CD8-positive, alpha-beta T cell (primary cell): ENCODE measurements at regions of chr1 and their contacts with region 1.

Region 1: GRCh38 chr1:23367791-23368561 is 1.7 kb downstream of the ZNF436 start:
- DNase-seq: peak; percentile 94 to 99 (median 97)
- ATAC-seq: peak; percentile 90
- H3K4me3 ChIP-seq: peak overlapping the region; percentile 95 to 97
- H3K4me3 Mint-ChIP-seq: peak overlapping the region; percentile 100
- H3K27ac ChIP-seq: peak overlapping the region; percentile 68 to 92
- H3K27ac Mint-ChIP-seq: peak overlapping the region; percentile 94
- H3K4me1 ChIP-seq: peaks cover 21% of the 10 kb centered on the region
- H3K4me1 Mint-ChIP-seq: peaks cover 38% of the 10 kb centered on the region
- H3K27me3 ChIP-seq: no peaks in the 10 kb centered on the region
- H3K27me3 Mint-ChIP-seq: no peaks in the 10 kb centered on the region
- CTCF ChIP-seq: no peak

Region 2: GRCh38 chr1:23344111-23344986 is 23.6 kb before region 1 on chr1 and contains the start of gene HNRNPR:
- CTCF ChIA-PET with region 1: interaction called, 4 read pairs
- POLR2A ChIA-PET with region 1: interaction called, 46 read pairs
- intact Hi-C with region 1: loop called (anchors 1 kb)
- DNase-seq: peak; percentile 97 to 100 (median 99)
- ATAC-seq: peak; percentile 96
- H3K4me3 ChIP-seq: peak within 1 kb of the TSS; percentile 70 to 93
- H3K4me3 Mint-ChIP-seq: peak within 1 kb of the TSS; percentile 94
- H3K27ac ChIP-seq: peak within 1 kb of the TSS; percentile 66 to 78
- H3K27ac Mint-ChIP-seq: peak within 1 kb of the TSS; percentile 96
- H3K4me1 ChIP-seq: peaks cover 31% of the 10 kb centered on the region
- H3K4me1 Mint-ChIP-seq: peaks cover 42% of the 10 kb centered on the region
- H3K27me3 ChIP-seq: no peaks in the 10 kb centered on the region
- H3K27me3 Mint-ChIP-seq: no peaks in the 10 kb centered on the region
- CTCF ChIP-seq: no peak
- total RNA-seq, gene HNRNPR: 102 to 103 TPM

Region 3: DNA sequence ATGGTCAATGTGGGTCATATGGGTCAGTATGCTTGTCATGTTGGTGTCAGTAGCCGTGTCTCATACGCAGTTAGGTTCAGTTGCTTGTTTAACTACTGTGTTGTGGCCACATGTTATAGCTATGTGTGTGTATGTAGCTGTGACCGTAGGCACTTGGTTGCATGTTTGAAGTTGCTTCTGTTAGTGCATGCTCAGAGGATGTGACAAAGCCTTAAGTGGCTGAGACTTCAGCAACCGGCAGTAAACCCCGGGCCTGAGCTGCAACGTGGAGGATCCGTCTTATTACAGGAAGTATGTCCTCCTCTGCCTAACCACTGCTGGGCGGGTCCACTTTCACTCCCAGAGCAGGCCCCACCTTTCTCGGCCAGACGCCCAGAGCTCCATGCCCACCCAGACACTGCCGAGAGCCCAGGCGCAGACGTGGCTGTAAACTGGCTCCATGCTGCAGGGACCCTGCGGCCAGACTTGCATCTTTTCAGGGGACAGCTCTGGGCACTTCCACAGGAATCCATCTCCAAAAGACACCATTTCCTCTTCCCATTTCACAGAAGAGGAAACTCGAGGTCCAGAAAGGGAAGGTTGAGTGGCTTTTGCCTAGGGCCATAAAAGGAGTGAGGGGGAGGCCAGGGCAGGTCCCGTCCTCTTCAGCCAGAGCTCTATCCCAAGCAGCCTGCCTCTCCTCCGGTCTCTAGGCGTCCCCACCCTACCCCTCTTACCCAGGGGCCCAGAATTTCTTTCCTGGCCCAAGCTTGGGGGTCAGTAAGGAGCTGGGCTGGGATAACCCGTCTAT is 54.5 kb after region 1 on chr1:
- CTCF ChIA-PET with region 1: no interaction called
- POLR2A ChIA-PET with region 1: interaction called, 9 read pairs
- intact Hi-C with region 1: loop called in 1 of 2 experiments (anchors 1 kb)
- DNase-seq: peak in 8 of 9 experiments; percentile 37 to 80 (median 55)
- ATAC-seq: peak; percentile 77
- H3K4me3 ChIP-seq: peak overlapping the region in 1 of 2 experiments; percentile 21
- H3K4me3 Mint-ChIP-seq: peak overlapping the region; percentile 89
- H3K27ac ChIP-seq: peak overlapping the region in 1 of 2 experiments; percentile 43
- H3K27ac Mint-ChIP-seq: peak overlapping the region; percentile 76
- H3K4me1 ChIP-seq: peaks cover 32% of the 10 kb centered on the region
- H3K4me1 Mint-ChIP-seq: peaks cover 36% of the 10 kb centered on the region
- H3K27me3 ChIP-seq: no peaks in the 10 kb centered on the region
- H3K27me3 Mint-ChIP-seq: peaks cover 3% of the 10 kb centered on the region
- CTCF ChIP-seq: no peak

Region 4: GRCh38 chr1:23452011-23452411 is 84.0 kb after region 1 on chr1:
- CTCF ChIA-PET with region 1: no interaction called
- POLR2A ChIA-PET with region 1: no interaction called
- intact Hi-C with region 1: no loop called
- DNase-seq: peak; percentile 10 to 75 (median 51)
- ATAC-seq: peak; percentile 89
- H3K4me3 ChIP-seq: no peak overlapping the region
- H3K4me3 Mint-ChIP-seq: peak overlapping the region; percentile 39
- H3K27ac ChIP-seq: no peak overlapping the region
- H3K27ac Mint-ChIP-seq: peak overlapping the region; percentile 18
- H3K4me1 ChIP-seq: peaks cover 14% of the 10 kb centered on the region
- H3K4me1 Mint-ChIP-seq: peaks cover 21% of the 10 kb centered on the region
- H3K27me3 ChIP-seq: peaks cover 0 to 8% of the 10 kb centered on the region in 2 experiments
- H3K27me3 Mint-ChIP-seq: peaks cover 8% of the 10 kb centered on the region
- CTCF ChIP-seq: no peak

Region 5: GRCh38 chr1:23530747-23531561 is 163.0 kb after region 1 on chr1 and contains the start of gene E2F2:
- CTCF ChIA-PET with region 1: no interaction called
- POLR2A ChIA-PET with region 1: interaction called, 4 read pairs
- intact Hi-C with region 1: loop called (anchors 1 to 2 kb)
- DNase-seq: peak; percentile 56 to 91 (median 82)
- ATAC-seq: peak; percentile 71
- H3K4me3 ChIP-seq: peak within 1 kb of the TSS; percentile 42 to 52
- H3K4me3 Mint-ChIP-seq: peak within 1 kb of the TSS; percentile 85
- H3K27ac ChIP-seq: peak within 1 kb of the TSS in 1 of 2 experiments; percentile 72
- H3K27ac Mint-ChIP-seq: peak within 1 kb of the TSS; percentile 13
- H3K4me1 ChIP-seq: peaks cover 60% of the 10 kb centered on the region
- H3K4me1 Mint-ChIP-seq: peaks cover 63% of the 10 kb centered on the region
- H3K27me3 ChIP-seq: no peaks in the 10 kb centered on the region
- H3K27me3 Mint-ChIP-seq: no peaks in the 10 kb centered on the region
- CTCF ChIP-seq: no peak
- total RNA-seq, gene E2F2: 0.19 to 0.38 TPM

Region 6: DNA sequence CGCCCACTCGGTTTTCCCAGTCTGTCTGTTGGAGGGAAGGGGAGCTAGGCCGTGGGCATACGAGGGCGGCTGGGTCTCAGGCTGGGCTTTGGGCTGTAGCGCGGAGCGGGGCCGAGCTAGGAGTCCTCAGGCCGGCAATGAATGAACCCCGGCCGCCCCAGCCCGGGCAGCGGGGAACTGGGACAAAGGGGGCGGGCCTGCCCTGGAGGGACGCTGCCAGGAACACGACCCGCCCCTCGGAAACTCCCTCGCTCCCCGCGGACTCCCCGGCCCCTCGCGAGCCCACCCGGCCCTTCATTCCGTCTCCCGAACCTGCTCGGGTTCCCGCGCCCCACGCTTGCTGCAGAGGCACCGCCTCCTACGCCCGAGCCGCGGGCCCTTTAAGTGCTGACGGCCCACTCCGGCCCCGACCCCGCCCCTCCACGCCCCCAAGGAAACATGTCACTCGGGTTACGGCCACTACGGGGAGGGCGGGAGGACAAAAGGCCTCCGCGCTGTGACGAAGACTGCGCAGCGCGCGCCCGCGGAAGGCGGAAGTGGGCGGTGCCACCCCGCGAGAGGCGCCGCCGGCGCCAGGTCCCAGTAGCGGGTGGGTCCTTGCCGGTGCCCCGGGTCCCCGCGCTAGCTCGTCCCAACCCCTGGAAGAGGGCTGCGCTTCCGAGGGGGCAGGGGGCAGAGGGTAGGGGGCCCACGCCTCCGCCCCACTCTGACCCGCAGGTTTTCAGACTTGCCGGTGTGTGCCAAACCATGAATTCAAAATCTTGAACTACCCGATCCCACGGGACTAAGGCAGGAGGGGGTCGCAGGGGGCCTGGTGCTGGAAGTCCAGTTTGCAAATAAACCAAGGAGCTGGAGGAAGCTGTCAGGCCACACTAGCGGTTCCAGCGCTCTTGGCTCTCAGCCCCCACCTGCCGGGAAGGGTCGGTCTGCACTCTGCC is 432.7 kb after region 1 on chr1 and contains the start of gene GALE:
- CTCF ChIA-PET with region 1: no interaction called
- POLR2A ChIA-PET with region 1: no interaction called
- intact Hi-C with region 1: loop called in 1 of 2 experiments (anchors 2 kb)
- DNase-seq: peak; percentile 95 to 98 (median 97)
- ATAC-seq: peak; percentile 93
- H3K4me3 ChIP-seq: peak within 1 kb of the TSS; percentile 57 to 66
- H3K4me3 Mint-ChIP-seq: peak within 1 kb of the TSS; percentile 93
- H3K27ac ChIP-seq: peak within 1 kb of the TSS; percentile 78 to 82
- H3K27ac Mint-ChIP-seq: peak within 1 kb of the TSS; percentile 91
- H3K4me1 ChIP-seq: peaks cover 18% of the 10 kb centered on the region
- H3K4me1 Mint-ChIP-seq: peaks cover 12% of the 10 kb centered on the region
- H3K27me3 ChIP-seq: no peaks in the 10 kb centered on the region
- H3K27me3 Mint-ChIP-seq: no peaks in the 10 kb centered on the region
- CTCF ChIP-seq: no peak
- total RNA-seq, gene GALE: 4.6 to 4.7 TPM

Region 7: DNA sequence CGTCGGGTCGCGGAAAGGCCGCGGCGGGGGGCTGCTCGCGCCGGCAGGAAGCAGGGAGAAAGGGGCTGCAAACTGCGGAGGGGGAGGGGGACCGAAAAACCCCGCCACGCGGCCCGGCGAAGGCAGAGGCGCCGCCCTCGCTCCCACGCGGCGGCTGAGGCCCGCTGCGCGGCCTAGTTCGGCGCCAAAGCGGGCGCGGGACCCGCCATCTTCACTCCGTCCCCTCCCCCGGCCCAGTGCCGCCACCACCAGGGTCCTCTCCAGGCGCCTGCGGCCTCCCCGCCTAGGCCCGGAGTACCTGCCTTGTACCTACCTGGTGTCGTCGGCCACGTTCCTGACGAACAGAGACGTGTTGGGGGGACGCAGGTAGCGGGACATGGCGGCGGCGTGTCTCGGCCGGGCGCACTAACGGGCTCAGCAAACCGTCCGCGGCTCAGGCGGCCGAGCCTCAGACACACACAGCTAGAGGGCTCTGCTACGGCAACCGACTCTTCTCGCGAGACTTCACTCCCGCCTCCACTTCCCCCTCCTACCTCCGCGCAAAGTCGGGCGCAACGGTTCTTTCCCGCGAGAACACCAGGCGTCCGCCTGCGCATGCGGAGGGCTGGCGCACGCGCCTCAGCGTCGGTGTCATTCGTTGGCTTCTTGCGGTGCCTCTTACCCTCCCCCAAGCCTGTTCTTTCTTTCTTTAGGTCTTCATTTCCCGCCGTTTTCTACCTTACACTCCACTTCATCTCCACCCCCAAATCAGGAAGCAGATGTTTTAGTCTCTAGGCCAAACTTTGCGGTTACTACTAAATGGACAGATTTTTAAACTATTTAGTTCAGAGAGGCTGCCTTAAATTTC is 612.1 kb after region 1 on chr1 and contains the start of gene SRSF10:
- CTCF ChIA-PET with region 1: no interaction called
- POLR2A ChIA-PET with region 1: no interaction called
- intact Hi-C with region 1: loop called in 1 of 2 experiments (anchors 10 kb)
- DNase-seq: peak; percentile 94 to 100 (median 97)
- ATAC-seq: peak; percentile 96
- H3K4me3 ChIP-seq: peak within 1 kb of the TSS; percentile 87 to 94
- H3K4me3 Mint-ChIP-seq: peak within 1 kb of the TSS; percentile 92
- H3K27ac ChIP-seq: peak within 1 kb of the TSS; percentile 92 to 98
- H3K27ac Mint-ChIP-seq: peak within 1 kb of the TSS; percentile 92
- H3K4me1 ChIP-seq: peaks cover 41% of the 10 kb centered on the region
- H3K4me1 Mint-ChIP-seq: peaks cover 52% of the 10 kb centered on the region
- H3K27me3 ChIP-seq: no peaks in the 10 kb centered on the region
- H3K27me3 Mint-ChIP-seq: no peaks in the 10 kb centered on the region
- CTCF ChIP-seq: peak; percentile 18
- total RNA-seq, gene SRSF10: 321 to 335 TPM

Region 8: GRCh38 chr1:24744911-24745710 is 1377.1 kb after region 1 on chr1 and contains the start of gene CLIC4:
- CTCF ChIA-PET with region 1: no interaction called
- POLR2A ChIA-PET with region 1: no interaction called
- intact Hi-C with region 1: loop called in 1 of 2 experiments (anchors 5 kb)
- DNase-seq: peak; percentile 97 to 100 (median 99)
- ATAC-seq: peak; percentile 92
- H3K4me3 ChIP-seq: peak within 1 kb of the TSS; percentile 52 to 54
- H3K4me3 Mint-ChIP-seq: peak within 1 kb of the TSS; percentile 86
- H3K27ac ChIP-seq: no peak within 1 kb of the TSS
- H3K27ac Mint-ChIP-seq: peak within 1 kb of the TSS; percentile 72
- H3K4me1 ChIP-seq: peaks cover 8% of the 10 kb centered on the region
- H3K4me1 Mint-ChIP-seq: peaks cover 27% of the 10 kb centered on the region
- H3K27me3 ChIP-seq: peaks cover 0 to 3% of the 10 kb centered on the region in 2 experiments
- H3K27me3 Mint-ChIP-seq: peaks cover 6% of the 10 kb centered on the region
- CTCF ChIP-seq: no peak
- total RNA-seq, gene CLIC4: 1.2 to 1.3 TPM